PC-9 (cell line): ENCODE measurements at regions of chr1 and their contacts with region 1.

Region 1: DNA sequence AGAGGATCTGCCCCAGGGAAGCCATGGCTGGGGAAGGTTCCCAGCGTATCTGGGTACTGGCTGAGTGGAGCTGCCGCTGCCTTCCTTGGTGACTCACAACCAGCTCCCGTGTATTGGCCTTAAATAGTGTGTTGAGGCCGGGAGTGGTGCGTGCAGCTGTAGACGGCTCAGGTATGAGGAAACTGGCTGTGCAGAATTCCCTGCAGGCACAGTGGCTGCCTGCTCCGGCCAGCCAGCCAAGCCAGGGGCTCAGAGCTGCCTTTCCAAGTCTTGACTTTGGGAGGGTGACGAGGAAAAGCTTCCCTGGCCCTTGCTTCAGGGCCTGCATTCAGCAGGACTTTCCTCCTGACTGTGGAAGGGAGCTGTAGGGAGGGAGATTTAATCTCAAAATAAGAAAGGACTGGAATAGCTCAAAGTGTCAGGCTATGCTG is at the start of gene VTCN1:
- DNase-seq: peak; percentile 91 to 98
- H3K4me3 ChIP-seq: peak within 1 kb of the TSS; percentile 22; the same call in 1 of the 2 replicates
- H3K27ac ChIP-seq: peak within 1 kb of the TSS; percentile 64
- H3K4me1 ChIP-seq: peaks cover 35% of the 10 kb centered on the region
- H3K27me3 ChIP-seq: no peaks in the 10 kb centered on the region
- CTCF ChIP-seq: no peak
- total RNA-seq, gene VTCN1: 3.6 and 5.0 TPM in 2 replicates

Region 2: GRCh38 chr1:116826818-116827606 is 383.8 kb before region 1 on chr1:
- CTCF ChIA-PET with region 1: no interaction called
- POLR2A ChIA-PET with region 1: no interaction called
- intact Hi-C with region 1: no loop called
- DNase-seq: peak in 1 of 2 experiments; percentile 29
- H3K4me3 ChIP-seq: no peak overlapping the region
- H3K27ac ChIP-seq: no peak overlapping the region
- H3K4me1 ChIP-seq: peaks cover 7% of the 10 kb centered on the region; the same call in 1 of the 2 replicates
- H3K27me3 ChIP-seq: no peaks in the 10 kb centered on the region
- CTCF ChIP-seq: no peak

Region 3: DNA sequence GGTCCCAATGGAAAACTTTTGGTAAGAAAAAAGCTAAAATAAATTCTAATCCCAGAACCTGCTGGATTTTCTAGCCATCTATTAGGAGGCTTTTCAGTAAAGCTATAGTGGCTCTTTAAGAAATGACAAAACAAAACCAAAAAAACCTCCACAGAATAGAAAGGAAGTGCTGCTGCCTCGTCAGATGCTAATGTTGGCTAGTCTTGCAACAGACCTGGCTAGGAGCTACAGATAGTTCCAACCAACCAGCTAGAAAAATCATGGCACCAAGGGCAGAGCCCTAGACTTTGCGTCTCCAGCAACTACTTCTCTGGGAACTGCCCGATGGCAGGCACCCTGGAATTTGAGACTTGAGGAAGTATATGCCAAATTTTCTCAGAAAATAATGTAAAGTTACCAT is 201.7 kb before region 1 on chr1:
- CTCF ChIA-PET with region 1: no interaction called
- POLR2A ChIA-PET with region 1: no interaction called
- intact Hi-C with region 1: no loop called
- DNase-seq: no peak
- H3K4me3 ChIP-seq: no peak overlapping the region
- H3K27ac ChIP-seq: no peak overlapping the region
- H3K4me1 ChIP-seq: peaks cover 30% of the 10 kb centered on the region
- H3K27me3 ChIP-seq: no peaks in the 10 kb centered on the region
- CTCF ChIP-seq: no peak

Region 4: GRCh38 chr1:117146570-117147346 is 64.1 kb before region 1 on chr1:
- CTCF ChIA-PET with region 1: no interaction called
- POLR2A ChIA-PET with region 1: interaction called, 7 read pairs
- intact Hi-C with region 1: loop called (anchors 2 kb)
- DNase-seq: peak; percentile 79 to 99
- H3K4me3 ChIP-seq: peak overlapping the region; percentile 27; the same call in 1 of the 2 replicates
- H3K27ac ChIP-seq: peak overlapping the region; percentile 89
- H3K4me1 ChIP-seq: peaks cover 41% of the 10 kb centered on the region
- H3K27me3 ChIP-seq: no peaks in the 10 kb centered on the region
- CTCF ChIP-seq: no peak

Region 5: DNA sequence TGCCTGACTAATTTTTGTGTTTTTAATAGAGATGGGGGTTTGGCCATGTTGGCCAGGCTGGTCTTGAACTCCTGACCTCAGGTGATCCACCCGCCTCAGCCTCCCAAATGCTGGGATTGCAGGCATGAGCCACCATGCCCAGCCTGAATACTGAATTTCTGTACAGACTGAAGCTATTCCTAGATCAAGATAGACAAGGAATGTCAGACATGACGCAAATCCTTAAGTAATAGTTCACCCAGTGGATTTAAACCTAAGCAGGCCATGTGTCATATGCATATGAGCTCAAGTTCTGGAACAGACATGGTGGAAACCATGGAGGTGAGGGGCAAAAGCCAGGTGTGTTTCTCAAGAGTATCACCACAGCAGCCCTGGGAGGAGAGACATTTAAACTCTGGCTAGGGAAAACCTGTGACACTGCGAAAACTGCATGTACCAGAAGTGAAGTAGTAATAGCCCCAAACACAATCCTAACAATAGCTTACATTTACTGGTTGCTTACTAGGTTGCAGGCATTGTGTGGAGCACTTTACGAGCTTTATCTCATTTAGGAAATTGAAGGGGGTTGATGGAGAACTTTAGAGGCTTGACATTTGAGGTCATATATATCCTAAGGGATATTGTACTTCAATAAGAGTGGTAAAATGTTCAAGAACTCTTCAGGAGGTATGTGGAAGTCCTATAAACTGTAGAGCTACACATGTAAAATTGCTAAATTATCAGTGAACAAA is 124.7 kb after region 1 on chr1:
- CTCF ChIA-PET with region 1: no interaction called
- POLR2A ChIA-PET with region 1: interaction called, 20 read pairs
- intact Hi-C with region 1: no loop called
- DNase-seq: no peak
- H3K4me3 ChIP-seq: no peak overlapping the region
- H3K27ac ChIP-seq: no peak overlapping the region
- H3K4me1 ChIP-seq: peaks cover 10% of the 10 kb centered on the region; the same call in 1 of the 2 replicates
- H3K27me3 ChIP-seq: no peaks in the 10 kb centered on the region
- CTCF ChIP-seq: no peak